Panc1 (cell line): ENCODE measurements at regions of chr16 and their contacts with region 1.

Region 1: GRCh38 chr16:12688951-12689850 is 114.5 kb downstream of the CPPED1 start:
- DNase-seq: no peak
- ATAC-seq: no peak
- H3K4me3 ChIP-seq: no peak overlapping the region
- H3K27ac ChIP-seq: no peak overlapping the region
- H3K4me1 ChIP-seq: no peaks in the 10 kb centered on the region
- H3K27me3 ChIP-seq: no peaks in the 10 kb centered on the region
- CTCF ChIP-seq: no peak

Region 2: GRCh38 chr16:12716658-12717057 is 27.5 kb after region 1 on chr16:
- CTCF ChIA-PET with region 1: interaction called, 15 read pairs
- POLR2A ChIA-PET with region 1: no interaction called
- in situ Hi-C with region 1: no loop called
- intact Hi-C with region 1: no loop called
- DNase-seq: no peak
- ATAC-seq: no peak
- H3K4me3 ChIP-seq: no peak overlapping the region
- H3K27ac ChIP-seq: no peak overlapping the region
- H3K4me1 ChIP-seq: no peaks in the 10 kb centered on the region
- H3K27me3 ChIP-seq: no peaks in the 10 kb centered on the region
- CTCF ChIP-seq: no peak